ENCODE measurements at regions of chr5 and their contacts with region 1.

Region 1: GRCh38 chr5:149828161-149828884 is 98.2 kb downstream of the PPARGC1B start:
- DNase-seq: peak; percentile 87 to 88
- ATAC-seq: peak; percentile 46 to 73 (median 69)
- H3K4me3 ChIP-seq: no peak overlapping the region
- H3K27ac ChIP-seq: peak overlapping the region in 9 of 10 donors; percentile 20 to 89 (median 79)
- H3K4me1 ChIP-seq: peaks cover 38 to 73% (median 53%) of the 10 kb centered on the region in 9 donors
- H3K27me3 ChIP-seq: no peaks in the 10 kb centered on the region
- CTCF ChIP-seq: peak; percentile 73 to 95 (median 89)

Region 2: DNA sequence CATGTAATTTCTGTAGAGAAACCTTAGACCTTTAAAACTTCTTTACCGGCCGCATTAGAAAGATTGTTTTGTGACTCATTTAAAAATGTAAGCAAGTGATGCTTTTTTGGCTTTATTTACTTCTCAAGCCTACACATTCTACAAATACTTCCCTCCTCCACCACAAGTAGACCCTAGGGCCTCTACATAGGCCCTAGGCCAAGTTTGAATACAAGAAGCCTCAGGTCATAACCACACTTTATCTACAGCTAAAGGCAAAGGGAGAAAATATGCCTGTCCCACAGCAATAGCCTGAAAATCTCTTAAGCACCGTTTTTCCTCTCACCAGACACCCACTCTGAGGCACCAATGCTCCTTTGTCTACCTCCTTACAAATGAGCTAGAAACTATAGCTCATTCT is 331.0 kb before region 1 on chr5:
- intact Hi-C with region 1: no loop called
- DNase-seq: no peak
- ATAC-seq: peak in 4 of 8 donors; percentile 37 to 58 (median 38)
- H3K4me3 ChIP-seq: no peak overlapping the region
- H3K27ac ChIP-seq: peak overlapping the region in 9 of 10 donors; percentile 22 to 75 (median 42)
- H3K4me1 ChIP-seq: peaks cover 5 to 32% (median 12%) of the 10 kb centered on the region in 9 donors
- H3K27me3 ChIP-seq: no peaks in the 10 kb centered on the region
- CTCF ChIP-seq: no peak

Region 3: DNA sequence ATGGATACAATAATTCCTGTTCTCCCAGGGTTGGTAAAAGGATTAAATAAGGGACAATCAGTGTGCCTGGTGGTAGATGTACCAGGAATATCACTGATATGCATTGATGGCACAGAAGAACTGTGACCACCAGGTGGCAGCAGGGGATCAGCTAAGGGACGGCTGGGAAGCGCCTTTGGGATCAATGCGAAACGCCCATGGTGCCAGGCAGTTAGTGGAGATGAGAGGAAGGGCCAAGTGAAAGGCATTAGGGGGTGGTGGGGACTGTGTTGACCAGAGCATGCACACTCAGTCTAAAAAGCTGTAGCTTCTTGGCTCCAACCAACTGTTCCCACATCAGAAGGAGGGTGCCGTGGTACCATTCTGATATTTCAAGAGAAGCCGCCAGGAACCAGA is 191.5 kb before region 1 on chr5:
- intact Hi-C with region 1: loop called (anchors 1 to 5 kb)
- DNase-seq: peak in 1 of 2 donors; percentile 87
- ATAC-seq: peak; percentile 45 to 72 (median 56)
- H3K4me3 ChIP-seq: no peak overlapping the region
- H3K27ac ChIP-seq: no peak overlapping the region
- H3K4me1 ChIP-seq: peaks cover 13 to 45% (median 27%) of the 10 kb centered on the region in 9 donors
- H3K27me3 ChIP-seq: no peaks in the 10 kb centered on the region
- CTCF ChIP-seq: peak; percentile 65 to 90 (median 86)

Region 4: GRCh38 chr5:149667084-149667828 is 161.1 kb before region 1 on chr5:
- intact Hi-C with region 1: loop called in 3 of 10 experiments (anchors 1 to 5 kb)
- DNase-seq: peak in 1 of 2 donors; percentile 26
- ATAC-seq: peak in 6 of 8 donors; percentile 55 to 67 (median 58)
- H3K4me3 ChIP-seq: no peak overlapping the region
- H3K27ac ChIP-seq: peak overlapping the region in 9 of 10 donors; percentile 7 to 83 (median 74)
- H3K4me1 ChIP-seq: peaks cover 3 to 30% (median 22%) of the 10 kb centered on the region in 9 donors
- H3K27me3 ChIP-seq: no peaks in the 10 kb centered on the region
- CTCF ChIP-seq: peak; percentile 68 to 84 (median 81)

Region 5: GRCh38 chr5:149759986-149760853 is 68.1 kb before region 1 on chr5:
- intact Hi-C with region 1: loop called in 3 of 10 experiments (anchors 2 to 10 kb)
- DNase-seq: no peak
- ATAC-seq: peak in 7 of 8 donors; percentile 52 to 88 (median 61)
- H3K4me3 ChIP-seq: no peak overlapping the region
- H3K27ac ChIP-seq: peak overlapping the region in 3 of 10 donors; percentile 36 to 44 (median 42)
- H3K4me1 ChIP-seq: peaks cover 6 to 90% (median 60%) of the 10 kb centered on the region in 9 donors
- H3K27me3 ChIP-seq: no peaks in the 10 kb centered on the region
- CTCF ChIP-seq: peak in 5 of 9 donors; percentile 17 to 57 (median 40)

Region 6: GRCh38 chr5:149775785-149776184 is 52.5 kb before region 1 on chr5:
- intact Hi-C with region 1: loop called in 4 of 10 experiments (anchors 5 kb)
- DNase-seq: no peak
- ATAC-seq: peak in 1 of 8 donors; percentile 19
- H3K4me3 ChIP-seq: no peak overlapping the region
- H3K27ac ChIP-seq: peak overlapping the region in 8 of 10 donors; percentile 30 to 79 (median 66)
- H3K4me1 ChIP-seq: peaks cover 29 to 97% (median 88%) of the 10 kb centered on the region in 9 donors
- H3K27me3 ChIP-seq: no peaks in the 10 kb centered on the region
- CTCF ChIP-seq: peak in 8 of 9 donors; percentile 14 to 64 (median 43)

Region 7: DNA sequence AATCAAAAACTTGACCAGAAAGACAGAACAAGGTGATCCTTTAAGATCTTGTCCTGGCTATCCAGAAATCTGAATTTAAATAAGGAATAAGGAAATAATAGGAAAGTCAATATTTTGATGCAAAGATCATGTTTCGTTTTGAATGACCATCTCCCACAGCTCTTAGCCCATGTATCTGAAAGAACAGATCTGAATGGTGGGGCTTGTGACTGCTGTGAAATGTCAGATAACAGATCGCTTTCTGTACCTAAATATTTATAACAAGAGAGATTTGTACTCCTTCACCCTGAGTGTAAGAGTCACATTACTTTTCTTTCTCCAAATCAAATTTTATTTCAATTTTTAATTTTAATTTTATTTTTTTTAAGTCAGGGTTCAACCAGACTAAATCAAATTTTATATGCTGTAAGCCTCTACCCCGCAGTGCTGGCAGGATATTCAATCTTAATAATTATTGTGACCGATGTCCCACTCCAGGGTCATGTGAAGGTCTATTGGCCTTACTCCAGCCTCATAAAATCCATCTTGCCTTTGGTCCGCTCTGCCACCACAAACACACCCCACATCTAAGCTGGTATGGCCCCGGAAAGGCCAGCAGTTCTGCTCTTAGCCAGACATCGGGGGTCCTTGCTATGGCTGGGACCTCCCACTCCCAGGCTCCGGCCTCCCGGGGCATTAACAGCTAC is 125.3 kb after region 1 on chr5:
- intact Hi-C with region 1: no loop called
- DNase-seq: no peak
- ATAC-seq: no peak
- H3K4me3 ChIP-seq: no peak overlapping the region
- H3K27ac ChIP-seq: no peak overlapping the region
- H3K4me1 ChIP-seq: no peaks in the 10 kb centered on the region
- H3K27me3 ChIP-seq: no peaks in the 10 kb centered on the region
- CTCF ChIP-seq: no peak

Measured in heart right ventricle (tissue), 16 donors.